GM10248 (cell line): ENCODE measurements at regions of chr1 and their contacts with region 1.

Region 1: DNA sequence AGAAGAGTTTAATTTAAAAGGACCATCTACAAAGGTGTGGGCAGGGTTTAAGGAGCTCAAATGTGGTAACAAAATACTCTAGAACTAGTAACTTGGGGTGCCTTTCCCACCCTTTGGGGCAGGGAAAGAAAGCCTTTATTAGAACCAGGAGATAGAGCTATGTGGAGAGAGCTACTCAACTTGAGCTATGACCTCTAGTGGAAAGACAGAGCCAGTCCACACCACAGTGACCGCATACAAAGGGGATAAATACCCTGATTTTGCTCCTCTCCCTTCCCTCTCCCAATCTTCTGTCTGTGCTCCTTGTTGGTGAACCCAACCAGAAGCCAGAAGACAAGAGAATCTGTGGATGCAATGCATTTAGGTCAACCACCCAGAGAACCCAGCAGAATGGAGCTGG is 54.4 kb upstream of the JAK1 start:
- DNase-seq: no peak
- CTCF ChIP-seq: peak; percentile 48

Region 2: GRCh38 chr1:65002508-65003315 is 18.1 kb before region 1 on chr1:
- CTCF ChIA-PET with region 1: interaction called, 12 read pairs
- POLR2A ChIA-PET with region 1: no interaction called
- DNase-seq: peak; percentile 66
- CTCF ChIP-seq: no peak

Region 3: DNA sequence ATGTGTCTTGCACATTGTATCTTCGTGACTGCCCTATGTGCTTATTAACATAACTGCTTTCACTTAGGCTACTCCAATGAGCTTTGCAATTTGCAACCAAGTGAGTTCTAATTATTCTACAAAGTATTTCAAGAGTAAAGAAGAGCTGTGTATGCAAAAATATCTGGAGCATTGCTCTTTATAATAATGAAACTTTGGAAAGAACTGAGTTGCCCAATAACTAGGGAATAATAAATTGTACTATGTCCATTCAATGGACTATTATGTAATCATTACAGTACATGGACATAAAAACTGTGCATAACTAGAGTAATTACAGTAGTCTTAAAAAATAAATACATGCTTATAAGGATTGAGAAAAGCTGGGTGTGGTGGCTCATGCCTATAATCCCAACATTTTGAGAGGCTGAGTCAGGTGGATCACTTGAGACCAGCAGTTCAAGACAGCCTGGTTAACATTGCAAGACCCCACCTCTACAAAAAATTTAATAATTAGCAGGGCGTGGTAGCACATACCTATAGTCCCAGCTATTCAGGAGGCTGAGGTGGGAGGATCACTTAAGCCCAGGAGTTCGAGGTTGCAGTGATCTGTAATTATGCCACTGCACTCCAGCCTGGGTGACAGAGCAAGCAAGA is 15.9 kb after region 1 on chr1:
- CTCF ChIA-PET with region 1: interaction called, 11 read pairs
- POLR2A ChIA-PET with region 1: no interaction called
- DNase-seq: no peak
- CTCF ChIP-seq: no peak